ENCODE measurements at regions of chr3 and their contacts with region 1.

Region 1: GRCh38 chr3:185976977-185977678 is 39.3 kb upstream of the TRA2B start:
- DNase-seq: peak; percentile 82
- H3K4me3 ChIP-seq: no peak overlapping the region
- H3K27ac ChIP-seq: no peak overlapping the region
- H3K4me1 ChIP-seq: no peaks in the 10 kb centered on the region
- H3K27me3 ChIP-seq: no peaks in the 10 kb centered on the region
- CTCF ChIP-seq: peak; percentile 95

Region 2: GRCh38 chr3:185837414-185837813 is 139.7 kb before region 1 on chr3:
- CTCF ChIA-PET with region 1: no interaction called
- POLR2A ChIA-PET with region 1: no interaction called
- intact Hi-C with region 1: no loop called
- DNase-seq: no peak
- H3K4me3 ChIP-seq: no peak overlapping the region
- H3K27ac ChIP-seq: no peak overlapping the region
- H3K4me1 ChIP-seq: no peaks in the 10 kb centered on the region
- H3K27me3 ChIP-seq: no peaks in the 10 kb centered on the region
- CTCF ChIP-seq: no peak

Region 3: DNA sequence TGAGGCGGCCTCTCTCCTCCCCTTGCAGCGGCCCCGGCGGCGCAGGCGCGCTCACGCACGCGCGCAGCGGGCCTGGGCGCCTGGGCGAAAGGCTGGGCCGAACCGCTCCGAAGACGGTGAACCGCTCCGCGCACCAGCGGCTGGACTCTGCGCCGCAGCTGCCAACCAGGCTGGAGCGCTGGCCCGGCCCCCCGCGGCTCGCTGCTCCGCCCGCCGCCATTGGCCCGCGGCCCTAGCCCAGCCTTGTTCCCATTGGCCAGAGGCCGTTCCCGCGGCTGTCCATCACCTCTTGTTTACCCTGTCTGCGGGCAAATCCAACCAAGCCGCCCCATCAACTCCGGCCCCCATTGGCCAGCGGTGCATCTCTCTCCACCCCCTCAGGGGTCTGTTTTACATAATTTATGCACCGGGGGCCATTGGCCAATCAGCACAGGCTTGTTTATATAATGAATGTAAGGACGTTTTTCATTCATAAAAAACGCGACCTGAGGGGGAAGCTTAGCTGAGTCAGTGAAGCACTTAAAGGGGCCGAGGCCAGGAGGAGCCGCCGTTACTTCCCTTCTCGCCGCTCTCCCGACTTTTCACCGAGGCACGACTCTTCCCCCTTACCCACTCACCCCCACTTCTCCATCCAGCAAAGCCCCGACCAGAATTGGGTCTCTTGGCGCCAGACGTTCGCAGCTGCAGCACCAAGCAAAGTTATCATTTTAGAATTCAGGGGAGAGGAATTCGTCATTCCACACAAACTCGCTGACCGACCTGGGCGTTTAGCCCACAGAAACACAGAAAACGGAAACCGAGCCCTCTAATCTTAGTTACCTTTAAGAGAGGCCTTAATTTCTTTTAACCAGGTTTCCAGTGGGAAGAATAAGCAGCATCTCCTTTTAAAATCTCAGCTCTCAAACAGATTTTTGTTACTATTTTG is 132.1 kb after region 1 on chr3 and contains the start of gene ETV5:
- CTCF ChIA-PET with region 1: no interaction called
- POLR2A ChIA-PET with region 1: no interaction called
- intact Hi-C with region 1: no loop called
- DNase-seq: peak; percentile 100
- H3K4me3 ChIP-seq: peak within 1 kb of the TSS; percentile 70
- H3K27ac ChIP-seq: peak within 1 kb of the TSS; percentile 89
- H3K4me1 ChIP-seq: peaks cover 35% of the 10 kb centered on the region
- H3K27me3 ChIP-seq: no peaks in the 10 kb centered on the region
- CTCF ChIP-seq: no peak
- total RNA-seq, gene ETV5: 87.4 and 92.9 TPM in 2 replicates

Region 4: DNA sequence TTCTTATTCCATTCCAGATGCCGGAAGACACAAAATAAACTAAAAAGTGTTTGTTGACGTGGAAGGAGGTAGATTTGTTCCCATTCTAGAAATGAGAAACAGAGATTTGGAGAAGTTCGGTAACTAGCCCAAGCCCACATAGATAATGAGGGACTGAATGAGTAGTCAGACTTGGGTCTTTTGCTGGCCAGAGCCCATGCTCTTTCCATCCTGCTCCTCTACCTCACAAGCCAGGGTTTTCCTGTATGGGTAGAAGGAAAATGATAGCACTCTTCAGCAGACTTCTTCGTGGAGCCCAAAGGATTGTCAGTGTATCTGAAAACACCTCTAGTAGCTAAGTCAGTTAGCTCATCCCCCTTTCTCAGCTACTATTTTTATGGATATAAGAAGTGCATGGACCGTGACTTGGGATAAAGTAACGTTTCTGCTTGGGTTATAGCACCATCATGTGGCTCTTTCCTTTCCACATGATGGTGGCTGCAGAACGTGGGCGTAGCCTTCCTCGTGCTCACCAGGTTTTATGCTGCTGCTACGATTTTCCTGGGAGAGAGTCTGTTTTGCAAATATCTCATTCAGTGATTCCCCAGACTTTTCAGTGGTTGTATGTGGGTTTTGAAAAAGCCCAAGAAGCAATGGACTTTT is 300.3 kb after region 1 on chr3:
- CTCF ChIA-PET with region 1: interaction called, 26 read pairs
- POLR2A ChIA-PET with region 1: no interaction called
- intact Hi-C with region 1: no loop called
- DNase-seq: peak; percentile 83
- H3K4me3 ChIP-seq: no peak overlapping the region
- H3K27ac ChIP-seq: no peak overlapping the region
- H3K4me1 ChIP-seq: no peaks in the 10 kb centered on the region
- H3K27me3 ChIP-seq: no peaks in the 10 kb centered on the region
- CTCF ChIP-seq: peak; percentile 82

Measured in A673 (cell line).